ENCODE measurements at regions of chr2 and their contacts with region 1.

Region 1: DNA sequence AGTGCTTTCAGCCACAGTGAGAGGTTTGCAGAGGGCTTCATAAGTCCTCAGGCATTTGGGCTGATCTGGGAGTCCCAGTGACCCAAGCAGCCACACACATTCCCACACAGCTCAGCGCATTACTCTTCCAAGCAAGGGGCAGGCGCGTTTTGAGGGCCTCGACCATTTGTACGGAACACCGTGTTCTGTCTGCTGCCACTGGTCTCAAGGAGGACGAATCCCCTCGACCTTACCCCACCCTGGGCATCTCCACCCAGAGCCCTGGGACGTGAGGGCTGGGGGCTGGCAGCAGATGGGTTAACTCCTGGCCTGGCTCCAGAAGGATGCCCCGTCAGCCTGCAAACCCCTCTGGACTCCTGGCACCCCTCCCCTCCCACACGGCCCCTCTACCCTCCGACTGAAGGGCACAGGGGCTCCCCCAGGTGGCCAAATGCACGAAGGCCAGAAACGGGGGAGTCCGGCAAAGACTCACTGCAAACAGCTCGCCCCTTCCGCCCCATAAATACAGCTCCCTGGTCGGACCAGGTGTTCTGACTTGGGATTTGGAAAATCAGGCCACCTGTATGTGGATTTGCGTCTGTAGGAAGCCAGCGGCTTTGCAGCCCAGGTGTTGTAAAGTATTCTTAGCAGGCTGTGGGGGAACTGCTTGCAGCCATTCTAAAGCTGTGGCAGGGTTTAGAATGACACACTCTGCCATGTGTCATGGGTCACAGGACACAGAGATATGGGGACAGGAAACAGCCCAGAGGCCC is 33.6 kb upstream of the PTMA start:
- DNase-seq: peak; percentile 72
- CTCF ChIP-seq: peak; percentile 92

Region 2: GRCh38 chr2:231409776-231410175 is 265.0 kb before region 1 on chr2:
- CTCF ChIA-PET with region 1: no interaction called
- POLR2A ChIA-PET with region 1: no interaction called
- DNase-seq: no peak
- CTCF ChIP-seq: no peak

Region 3: DNA sequence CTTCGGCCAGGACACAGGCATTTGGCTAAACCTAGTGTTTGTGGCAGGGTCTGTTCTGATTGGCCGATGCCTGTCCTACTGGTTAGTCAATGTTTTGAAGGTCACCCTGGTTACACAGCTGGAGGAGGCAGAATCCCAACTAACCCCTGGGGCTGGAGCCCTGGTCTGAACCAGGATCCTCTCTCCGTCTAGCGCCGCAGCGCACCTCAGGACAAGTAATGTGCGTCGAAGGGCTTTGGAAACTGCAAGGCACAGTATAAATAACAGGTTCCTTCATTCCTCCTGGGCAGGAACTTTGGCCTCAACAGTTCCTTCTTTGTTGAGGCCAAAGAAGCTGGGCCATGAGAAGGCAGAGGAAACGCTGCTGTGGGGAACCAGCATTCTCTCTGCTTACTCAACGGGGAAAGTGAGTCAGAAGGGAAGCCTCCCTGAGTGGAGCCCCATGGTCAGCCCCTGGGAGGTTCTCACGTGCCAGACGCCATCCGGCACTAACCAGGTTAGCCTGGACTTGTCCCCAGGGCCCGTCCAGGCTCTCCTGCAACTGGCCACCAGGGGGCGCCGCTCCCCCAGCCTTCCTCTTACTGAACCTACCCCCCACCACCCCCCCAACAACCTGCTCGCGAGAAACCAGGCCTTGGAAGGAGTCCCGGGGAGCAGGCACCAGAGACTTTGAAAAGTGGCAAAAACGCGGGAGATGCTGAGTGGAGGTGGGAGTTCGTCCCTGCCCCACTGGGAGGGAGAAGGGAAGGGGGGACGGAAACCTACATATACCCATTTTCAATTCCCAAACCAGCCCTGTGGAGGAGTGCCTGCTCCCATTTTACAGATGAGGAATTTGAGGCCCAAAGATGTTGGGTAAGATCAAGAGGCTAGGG is 62.3 kb before region 1 on chr2:
- CTCF ChIA-PET with region 1: interaction called, 243 read pairs
- POLR2A ChIA-PET with region 1: interaction called, 13 read pairs
- DNase-seq: peak; percentile 89
- CTCF ChIP-seq: peak; percentile 85

Region 4: GRCh38 chr2:231648587-231649174 is 26.1 kb before region 1 on chr2:
- CTCF ChIA-PET with region 1: interaction called, 186 read pairs
- POLR2A ChIA-PET with region 1: no interaction called
- DNase-seq: peak; percentile 75
- CTCF ChIP-seq: peak; percentile 79

Region 5: GRCh38 chr2:231687133-231687852 is 12.5 kb after region 1 on chr2:
- CTCF ChIA-PET with region 1: interaction called, 184 read pairs
- POLR2A ChIA-PET with region 1: interaction called, 3 read pairs
- DNase-seq: peak; percentile 85
- CTCF ChIP-seq: peak; percentile 81

Region 6: DNA sequence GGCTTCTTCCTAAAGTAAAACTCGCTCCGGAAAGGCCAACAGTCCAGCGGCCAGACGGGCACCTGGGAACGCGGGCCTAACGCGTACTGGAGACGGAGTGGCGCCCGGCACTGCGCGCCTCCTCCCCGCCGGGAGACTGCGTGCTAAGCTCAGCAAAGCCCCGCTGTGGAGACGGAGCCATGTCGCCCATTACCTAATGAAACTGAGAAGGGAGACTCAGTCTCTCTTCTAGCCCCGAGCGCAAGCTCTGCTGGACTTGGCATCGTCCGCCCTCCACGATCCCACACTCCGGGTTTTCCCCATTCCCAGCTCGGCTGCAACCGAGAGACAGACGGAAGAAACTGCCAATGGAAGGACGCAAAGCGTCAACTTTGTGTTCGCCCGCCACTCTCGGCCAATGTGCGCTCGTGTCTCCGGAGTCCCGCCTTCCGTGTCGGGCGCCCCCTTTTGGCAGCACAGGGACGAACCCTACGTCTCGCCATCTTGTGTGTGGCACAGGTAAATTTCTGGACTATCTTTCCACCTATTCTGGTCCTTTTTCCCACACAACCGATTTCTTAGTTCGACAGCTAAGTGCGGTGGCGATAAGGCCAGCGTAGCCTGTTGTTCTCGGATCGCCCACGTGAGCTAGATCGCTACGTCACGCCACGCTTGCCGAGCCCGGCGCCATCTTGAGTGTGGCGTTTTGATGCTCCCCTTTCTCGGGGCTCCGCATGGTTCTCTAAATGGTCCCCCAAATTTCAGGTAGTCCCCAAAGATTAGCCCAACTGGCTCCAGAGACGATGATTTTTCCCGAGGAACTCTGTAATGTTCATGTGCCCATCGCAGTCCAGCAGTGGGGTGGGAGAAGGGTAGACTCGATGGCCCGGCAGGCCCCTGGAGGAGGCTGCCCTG is 32.2 kb after region 1 on chr2:
- CTCF ChIA-PET with region 1: interaction called, 531 read pairs
- POLR2A ChIA-PET with region 1: interaction called, 34 read pairs
- DNase-seq: peak; percentile 94
- CTCF ChIP-seq: peak; percentile 90

Measured in GM10248 (cell line).